CD8-positive, alpha-beta memory T cell (primary cell): ENCODE measurements at regions of chr1 and their contacts with region 1.

Region 1: DNA sequence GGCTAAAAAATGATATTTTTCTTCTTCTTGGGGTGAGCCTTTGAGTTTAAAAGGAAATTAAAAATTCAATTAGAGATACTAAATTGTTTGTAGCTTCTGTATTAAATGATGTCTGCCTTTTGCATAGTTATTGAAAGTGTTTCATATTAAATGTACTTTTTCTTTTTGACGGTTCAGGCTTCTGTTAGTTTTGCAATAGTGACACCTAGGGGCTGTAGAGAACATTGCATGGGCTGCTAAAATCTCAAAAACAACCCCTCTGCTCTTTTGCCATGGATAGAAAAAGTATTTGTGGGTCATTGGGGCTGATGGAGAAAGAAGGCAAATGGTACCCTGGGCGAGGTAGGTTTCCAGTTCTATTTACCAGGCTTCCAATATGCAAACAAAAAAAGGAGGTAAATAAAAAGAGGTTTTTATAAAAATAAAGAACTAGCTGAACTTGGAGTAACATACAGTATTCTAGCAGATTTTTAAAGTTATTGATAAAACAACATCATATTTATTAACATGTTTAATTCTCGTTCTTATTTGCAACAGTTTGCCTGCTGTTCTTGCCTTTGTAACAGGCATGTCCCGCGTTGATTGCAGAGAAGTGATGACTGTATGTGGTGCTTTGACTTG is 115.4 kb upstream of the HOOK1 start:
- DNase-seq: peak in 3 of 5 donors; percentile 36 to 51 (median 42)
- H3K4me3 ChIP-seq: no peak overlapping the region
- H3K4me3 Mint-ChIP-seq: no peak overlapping the region
- H3K27ac ChIP-seq: no peak overlapping the region
- H3K27ac Mint-ChIP-seq: no peak overlapping the region
- H3K4me1 ChIP-seq: peaks cover 6% of the 10 kb centered on the region
- H3K4me1 Mint-ChIP-seq: peaks cover 17 to 28% (median 22%) of the 10 kb centered on the region in 3 donors
- H3K27me3 ChIP-seq: no peaks in the 10 kb centered on the region
- H3K27me3 Mint-ChIP-seq: peaks cover 0 to 2% of the 10 kb centered on the region in 2 donors

Region 2: GRCh38 chr1:58739856-58740466 is 959.4 kb before region 1 on chr1:
- CTCF ChIA-PET with region 1: interaction called, 29 read pairs
- POLR2A ChIA-PET with region 1: no interaction called
- DNase-seq: peak in 2 of 5 donors; percentile 43 to 60
- H3K4me3 ChIP-seq: no peak overlapping the region
- H3K4me3 Mint-ChIP-seq: no peak overlapping the region
- H3K27ac ChIP-seq: no peak overlapping the region
- H3K27ac Mint-ChIP-seq: no peak overlapping the region
- H3K4me1 ChIP-seq: no peaks in the 10 kb centered on the region
- H3K4me1 Mint-ChIP-seq: peaks cover 5 to 13% (median 9%) of the 10 kb centered on the region in 3 donors
- H3K27me3 ChIP-seq: no peaks in the 10 kb centered on the region
- H3K27me3 Mint-ChIP-seq: peaks cover 0 to 3% of the 10 kb centered on the region in 2 donors

Region 3: DNA sequence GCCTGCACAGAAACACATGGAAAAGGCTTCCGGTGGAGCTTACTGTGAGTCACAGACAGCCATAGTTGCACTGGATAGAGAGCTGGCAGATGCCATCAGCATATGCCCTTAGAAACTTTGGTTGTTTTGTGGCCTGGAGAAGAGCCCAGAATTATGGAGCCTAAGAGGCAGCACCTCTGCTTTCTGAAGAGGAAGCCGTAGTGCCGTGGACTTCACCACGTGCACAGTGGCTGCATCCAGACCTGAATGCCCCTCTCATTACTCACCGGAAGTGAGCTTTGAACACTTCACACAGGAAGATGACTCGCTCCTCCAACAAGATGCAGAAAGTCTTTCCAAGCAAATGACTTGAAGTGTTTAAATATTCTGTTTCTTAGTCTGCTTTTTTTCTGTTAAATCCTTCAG is 943.9 kb before region 1 on chr1:
- CTCF ChIA-PET with region 1: interaction called, 10 read pairs
- POLR2A ChIA-PET with region 1: no interaction called
- DNase-seq: peak; percentile 14 to 74 (median 50)
- H3K4me3 ChIP-seq: no peak overlapping the region
- H3K4me3 Mint-ChIP-seq: peak overlapping the region; percentile 8 to 84 (median 81)
- H3K27ac ChIP-seq: no peak overlapping the region
- H3K27ac Mint-ChIP-seq: peak overlapping the region; percentile 62 to 92 (median 87)
- H3K4me1 ChIP-seq: peaks cover 42% of the 10 kb centered on the region
- H3K4me1 Mint-ChIP-seq: peaks cover 52 to 61% (median 58%) of the 10 kb centered on the region in 3 donors
- H3K27me3 ChIP-seq: no peaks in the 10 kb centered on the region
- H3K27me3 Mint-ChIP-seq: no peaks in the 10 kb centered on the region

Region 4: DNA sequence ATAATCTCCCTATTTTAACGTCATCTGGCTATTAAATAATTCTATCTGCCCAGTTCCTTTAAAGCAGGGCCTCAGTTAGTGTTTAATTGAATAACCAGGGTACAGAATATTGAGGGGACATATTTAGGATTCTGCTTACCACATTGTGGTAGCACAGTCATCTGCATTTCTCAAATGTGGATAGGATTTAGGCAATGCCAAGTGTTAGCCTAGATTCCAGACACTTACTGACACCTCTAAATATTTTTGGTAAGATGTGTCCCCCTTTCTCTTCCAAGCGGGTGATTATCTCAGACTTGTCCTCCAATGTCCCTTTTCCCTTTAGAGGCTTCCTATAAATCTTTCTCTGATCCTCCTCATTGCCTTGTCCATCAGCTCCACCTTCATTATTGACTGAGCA is 45.4 kb before region 1 on chr1:
- CTCF ChIA-PET with region 1: no interaction called
- POLR2A ChIA-PET with region 1: no interaction called
- DNase-seq: no peak
- H3K4me3 ChIP-seq: no peak overlapping the region
- H3K4me3 Mint-ChIP-seq: no peak overlapping the region
- H3K27ac ChIP-seq: no peak overlapping the region
- H3K27ac Mint-ChIP-seq: no peak overlapping the region
- H3K4me1 ChIP-seq: no peaks in the 10 kb centered on the region
- H3K4me1 Mint-ChIP-seq: no peaks in the 10 kb centered on the region
- H3K27me3 ChIP-seq: no peaks in the 10 kb centered on the region
- H3K27me3 Mint-ChIP-seq: no peaks in the 10 kb centered on the region

Region 5: DNA sequence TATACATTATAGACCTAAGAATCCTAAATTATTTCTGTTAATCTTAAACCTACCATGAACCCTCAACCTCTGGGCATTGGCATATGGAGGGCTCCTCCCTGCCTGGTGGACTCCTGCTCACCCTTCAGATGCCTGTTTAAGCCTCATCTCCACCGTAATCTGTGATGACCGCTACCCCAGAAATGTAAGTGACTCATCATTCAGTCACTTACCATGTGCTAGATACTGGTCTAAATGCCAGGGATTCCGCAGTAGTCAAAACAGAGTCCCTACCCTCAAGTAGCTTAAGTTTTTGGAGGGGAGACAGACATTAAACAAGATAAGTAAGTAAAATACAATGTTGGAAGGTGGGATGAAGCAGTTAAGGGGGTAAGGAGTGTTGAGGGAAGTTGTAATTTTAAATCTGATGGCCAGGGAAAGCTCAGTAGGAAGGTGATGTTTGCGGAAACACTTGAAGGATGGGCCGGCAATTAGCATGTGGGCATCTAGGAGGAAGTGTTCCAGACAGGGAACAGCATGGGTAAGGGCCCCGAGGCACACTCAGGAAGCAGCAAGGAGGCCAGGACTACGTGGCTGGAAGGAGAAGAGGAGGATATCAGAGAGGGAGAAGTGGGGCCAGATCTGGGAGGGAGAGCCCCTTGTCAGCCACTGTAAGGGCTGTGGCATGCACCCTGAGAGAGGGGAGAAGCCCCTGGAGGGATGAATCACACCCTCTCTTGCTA is 26.3 kb before region 1 on chr1:
- CTCF ChIA-PET with region 1: no interaction called
- POLR2A ChIA-PET with region 1: no interaction called
- DNase-seq: no peak
- H3K4me3 ChIP-seq: no peak overlapping the region
- H3K4me3 Mint-ChIP-seq: no peak overlapping the region
- H3K27ac ChIP-seq: no peak overlapping the region
- H3K27ac Mint-ChIP-seq: peak overlapping the region in 2 of 8 donors; percentile 5 to 51
- H3K4me1 ChIP-seq: no peaks in the 10 kb centered on the region
- H3K4me1 Mint-ChIP-seq: no peaks in the 10 kb centered on the region
- H3K27me3 ChIP-seq: no peaks in the 10 kb centered on the region
- H3K27me3 Mint-ChIP-seq: no peaks in the 10 kb centered on the region

Region 6: DNA sequence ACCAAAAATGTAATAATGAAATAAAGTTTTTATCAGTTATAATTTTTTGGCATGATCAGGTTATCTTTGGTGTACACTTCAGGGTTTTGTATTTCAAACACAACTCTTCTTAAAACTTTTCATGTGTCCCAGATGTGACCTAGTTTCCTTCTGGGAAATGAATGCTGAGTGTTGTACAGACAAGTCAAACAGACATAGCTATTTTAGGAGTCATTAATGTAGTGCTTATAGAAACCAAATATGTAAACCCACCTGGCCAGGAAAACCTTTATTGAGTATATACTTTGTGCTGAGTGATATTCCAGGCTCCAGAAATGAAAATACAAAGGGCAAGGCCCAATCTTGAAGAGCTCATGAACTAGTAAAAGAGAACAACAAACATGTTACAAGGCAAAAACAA is 89.5 kb after region 1 on chr1:
- CTCF ChIA-PET with region 1: no interaction called
- POLR2A ChIA-PET with region 1: no interaction called
- DNase-seq: no peak
- H3K4me3 ChIP-seq: no peak overlapping the region
- H3K4me3 Mint-ChIP-seq: no peak overlapping the region
- H3K27ac ChIP-seq: no peak overlapping the region
- H3K27ac Mint-ChIP-seq: no peak overlapping the region
- H3K4me1 ChIP-seq: no peaks in the 10 kb centered on the region
- H3K4me1 Mint-ChIP-seq: peaks cover 0 to 7% (median 0%) of the 10 kb centered on the region in 3 donors
- H3K27me3 ChIP-seq: no peaks in the 10 kb centered on the region
- H3K27me3 Mint-ChIP-seq: peaks cover 18 to 28% of the 10 kb centered on the region in 2 donors